ENCODE measurements at regions of chr10 and their contacts with region 1.

Region 1: GRCh38 chr10:122703439-122704118 is 3.9 kb upstream of the C10orf120 start:
- DNase-seq: peak; percentile 71 to 74
- ATAC-seq: peak; percentile 80 to 93 (median 91)
- H3K4me3 ChIP-seq: no peak overlapping the region
- H3K27ac ChIP-seq: no peak overlapping the region
- H3K4me1 ChIP-seq: peaks cover 0 to 13% (median 6%) of the 10 kb centered on the region in 9 donors
- H3K27me3 ChIP-seq: no peaks in the 10 kb centered on the region
- CTCF ChIP-seq: peak; percentile 76 to 93 (median 86)

Region 2: DNA sequence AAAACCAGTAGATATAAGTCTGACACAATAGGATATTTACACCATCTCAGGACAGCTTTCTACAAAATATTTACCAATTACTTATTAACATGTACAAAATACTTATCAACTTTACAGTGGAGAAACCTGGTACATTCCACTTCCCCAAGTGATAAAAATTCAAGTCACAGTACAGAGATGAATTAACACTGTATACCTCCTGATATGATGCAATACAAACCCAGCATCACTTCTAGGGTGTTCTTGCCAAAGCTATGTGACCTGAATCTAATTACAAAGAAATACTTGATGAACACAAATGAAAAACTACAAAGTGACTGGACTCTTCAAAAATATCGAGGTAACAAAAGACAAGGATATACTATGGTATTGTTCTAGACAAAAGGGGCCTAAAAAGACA is 948.9 kb before region 1 on chr10:
- intact Hi-C with region 1: no loop called
- DNase-seq: no peak
- ATAC-seq: no peak
- H3K4me3 ChIP-seq: no peak overlapping the region
- H3K27ac ChIP-seq: peak overlapping the region in 1 of 10 donors; percentile 23
- H3K4me1 ChIP-seq: peaks cover 0 to 18% (median 5%) of the 10 kb centered on the region in 9 donors
- H3K27me3 ChIP-seq: no peaks in the 10 kb centered on the region
- CTCF ChIP-seq: no peak

Region 3: DNA sequence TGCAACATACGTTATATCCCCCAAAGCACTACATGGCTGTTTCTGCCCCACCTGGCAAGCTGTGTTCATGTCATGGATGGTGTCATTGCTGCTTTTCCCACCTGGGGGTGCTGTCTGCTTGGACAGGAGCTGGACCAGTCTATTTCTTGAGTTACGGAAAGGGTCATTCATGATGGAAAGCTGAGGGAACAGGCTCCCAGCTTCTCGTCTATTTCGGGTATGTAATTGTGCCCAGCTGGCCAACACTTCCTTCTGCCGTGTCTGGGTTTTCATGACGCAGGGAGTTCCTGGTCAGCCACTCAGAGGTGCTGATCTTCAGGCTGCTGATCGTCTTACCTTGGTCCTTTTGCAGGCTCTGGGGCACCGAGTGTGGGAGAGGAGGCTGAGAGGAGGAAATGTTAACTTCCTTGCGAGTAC is 423.8 kb before region 1 on chr10:
- intact Hi-C with region 1: loop called in 2 of 10 experiments (anchors 5 to 10 kb)
- DNase-seq: peak in 1 of 2 donors; percentile 49
- ATAC-seq: peak in 7 of 8 donors; percentile 36 to 73 (median 66)
- H3K4me3 ChIP-seq: no peak overlapping the region
- H3K27ac ChIP-seq: peak overlapping the region in 1 of 10 donors; percentile 25
- H3K4me1 ChIP-seq: peaks cover 0 to 13% (median 3%) of the 10 kb centered on the region in 9 donors
- H3K27me3 ChIP-seq: no peaks in the 10 kb centered on the region
- CTCF ChIP-seq: peak in 8 of 9 donors; percentile 38 to 71 (median 62)

Region 4: GRCh38 chr10:122298598-122299301 is 404.8 kb before region 1 on chr10:
- intact Hi-C with region 1: loop called in 6 of 10 experiments (anchors 5 to 10 kb)
- DNase-seq: peak; percentile 70 to 72
- ATAC-seq: peak; percentile 77 to 92 (median 89)
- H3K4me3 ChIP-seq: peak overlapping the region in 4 of 10 donors; percentile 2 to 25 (median 14)
- H3K27ac ChIP-seq: no peak overlapping the region
- H3K4me1 ChIP-seq: peaks cover 0 to 14% (median 6%) of the 10 kb centered on the region in 9 donors
- H3K27me3 ChIP-seq: no peaks in the 10 kb centered on the region
- CTCF ChIP-seq: peak; percentile 84 to 96 (median 92)

Region 5: DNA sequence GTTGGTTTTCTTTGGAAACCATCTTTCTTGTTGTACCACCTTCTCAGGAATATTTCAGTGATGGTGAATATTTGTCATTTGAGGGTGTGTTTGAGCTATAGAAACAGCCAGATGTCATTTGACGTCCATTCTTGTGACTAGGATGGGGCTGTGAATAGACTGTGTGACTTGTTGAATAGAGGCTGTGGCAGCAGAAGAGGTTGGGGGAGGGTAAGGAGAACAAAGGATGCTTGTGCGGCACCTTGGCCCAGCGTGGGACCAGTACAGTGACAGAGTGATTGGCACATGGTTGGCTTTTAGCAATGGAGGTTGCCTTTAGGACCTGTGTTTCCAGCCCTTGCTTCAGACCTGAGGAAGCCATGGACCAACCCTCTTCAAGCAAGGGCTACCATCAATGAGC is 131.7 kb before region 1 on chr10:
- intact Hi-C with region 1: loop called in 8 of 10 experiments (anchors 2 to 10 kb)
- DNase-seq: no peak
- ATAC-seq: no peak
- H3K4me3 ChIP-seq: no peak overlapping the region
- H3K27ac ChIP-seq: no peak overlapping the region
- H3K4me1 ChIP-seq: no peaks in the 10 kb centered on the region
- H3K27me3 ChIP-seq: no peaks in the 10 kb centered on the region
- CTCF ChIP-seq: no peak

Region 6: GRCh38 chr10:122648599-122649428 is 54.8 kb before region 1 on chr10:
- intact Hi-C with region 1: loop called (anchors 1 to 5 kb)
- DNase-seq: peak; percentile 41 to 54
- ATAC-seq: peak; percentile 64 to 74 (median 70)
- H3K4me3 ChIP-seq: no peak overlapping the region
- H3K27ac ChIP-seq: no peak overlapping the region
- H3K4me1 ChIP-seq: peaks cover 0 to 4% (median 0%) of the 10 kb centered on the region in 9 donors
- H3K27me3 ChIP-seq: peaks cover 0 to 7% (median 0%) of the 10 kb centered on the region in 7 donors
- CTCF ChIP-seq: peak; percentile 61 to 86 (median 82)

Region 7: DNA sequence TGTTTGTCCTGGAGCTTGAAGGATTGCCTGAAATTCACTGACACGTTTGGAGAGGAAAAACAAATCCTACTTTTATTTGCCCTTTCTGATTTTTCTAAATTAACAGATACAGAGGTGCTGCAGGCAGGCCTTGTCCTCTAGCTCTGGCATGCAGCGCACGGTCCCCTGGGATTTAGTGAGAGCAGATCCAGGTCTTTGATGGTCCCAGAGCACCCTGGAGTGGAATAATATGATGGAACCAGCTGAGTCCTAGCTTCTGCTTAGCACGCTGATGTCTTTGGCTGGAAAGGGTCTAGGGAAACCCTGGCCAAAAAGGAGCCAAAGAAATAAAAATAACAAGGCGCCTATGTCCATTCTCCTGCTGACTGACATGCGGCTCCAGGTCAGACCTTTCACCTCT is 44.5 kb before region 1 on chr10:
- intact Hi-C with region 1: no loop called
- DNase-seq: no peak
- ATAC-seq: no peak
- H3K4me3 ChIP-seq: no peak overlapping the region
- H3K27ac ChIP-seq: no peak overlapping the region
- H3K4me1 ChIP-seq: no peaks in the 10 kb centered on the region
- H3K27me3 ChIP-seq: peaks cover 0 to 9% (median 0%) of the 10 kb centered on the region in 7 donors
- CTCF ChIP-seq: no peak

Region 8: GRCh38 chr10:122854648-122855047 is 151.1 kb after region 1 on chr10:
- intact Hi-C with region 1: no loop called
- DNase-seq: no peak
- ATAC-seq: no peak
- H3K4me3 ChIP-seq: no peak overlapping the region
- H3K27ac ChIP-seq: no peak overlapping the region
- H3K4me1 ChIP-seq: peaks cover 0 to 3% (median 0%) of the 10 kb centered on the region in 9 donors
- H3K27me3 ChIP-seq: no peaks in the 10 kb centered on the region
- CTCF ChIP-seq: no peak

Measured in heart right ventricle (tissue), 16 donors.